ENCODE measurements at regions of chr4 and their contacts with region 1.

Region 1: GRCh38 chr4:77959566-77960338 is 97.1 kb downstream of the MRPL1 start:
- DNase-seq: no peak
- H3K4me3 Mint-ChIP-seq: no peak overlapping the region
- H3K27ac Mint-ChIP-seq: no peak overlapping the region
- H3K4me1 Mint-ChIP-seq: peaks cover 8% of the 10 kb centered on the region
- H3K27me3 Mint-ChIP-seq: no peaks in the 10 kb centered on the region

Region 2: DNA sequence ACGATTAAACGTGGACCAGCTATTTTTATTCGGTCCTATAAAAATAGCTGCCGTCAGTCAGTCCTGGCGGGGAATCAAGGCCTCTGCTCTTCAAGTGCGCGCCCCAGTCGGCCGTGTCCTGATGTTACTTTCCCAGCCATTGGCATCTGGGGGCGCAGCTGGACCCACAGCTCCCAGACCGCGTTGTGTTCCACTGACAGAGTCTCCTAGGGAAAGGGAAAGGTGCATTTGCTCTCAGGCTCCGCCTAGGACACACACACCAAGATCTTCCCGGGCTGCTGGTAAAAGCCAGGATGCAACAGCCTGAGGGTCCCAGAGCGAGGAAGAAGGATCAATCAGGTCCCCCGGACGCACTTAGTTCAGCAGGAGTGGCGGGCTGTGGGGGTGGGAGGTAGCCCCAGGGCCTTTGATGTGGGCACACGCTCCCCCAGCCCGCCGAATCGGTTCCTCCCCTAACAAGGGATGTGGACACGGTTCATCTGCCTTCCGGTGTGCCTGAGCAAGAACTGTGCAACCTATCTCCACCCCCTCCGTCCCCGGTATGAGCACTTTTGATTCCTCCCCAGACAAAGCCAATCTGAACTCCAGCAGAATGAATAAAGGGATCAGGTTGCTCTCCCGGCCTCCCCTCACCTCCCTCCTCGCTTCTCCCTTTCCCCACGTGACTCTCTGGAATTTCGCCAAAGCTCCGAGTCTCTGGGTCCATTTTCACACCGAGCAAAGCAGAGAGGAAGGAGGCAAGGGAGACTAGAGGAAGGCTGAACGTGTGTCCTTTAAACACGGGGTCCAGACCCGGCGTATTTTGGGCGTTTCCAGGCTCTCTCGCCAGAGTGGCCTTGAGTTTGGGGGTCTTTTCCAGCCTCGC is 96.7 kb after region 1 on chr4:
- CTCF ChIA-PET with region 1: interaction called, 4 read pairs
- POLR2A ChIA-PET with region 1: no interaction called
- intact Hi-C with region 1: loop called (anchors 5 kb)
- DNase-seq: peak; percentile 52
- H3K4me3 Mint-ChIP-seq: peak overlapping the region; percentile 53
- H3K27ac Mint-ChIP-seq: no peak overlapping the region
- H3K4me1 Mint-ChIP-seq: peaks cover 19% of the 10 kb centered on the region
- H3K27me3 Mint-ChIP-seq: peaks cover 46% of the 10 kb centered on the region

Region 3: DNA sequence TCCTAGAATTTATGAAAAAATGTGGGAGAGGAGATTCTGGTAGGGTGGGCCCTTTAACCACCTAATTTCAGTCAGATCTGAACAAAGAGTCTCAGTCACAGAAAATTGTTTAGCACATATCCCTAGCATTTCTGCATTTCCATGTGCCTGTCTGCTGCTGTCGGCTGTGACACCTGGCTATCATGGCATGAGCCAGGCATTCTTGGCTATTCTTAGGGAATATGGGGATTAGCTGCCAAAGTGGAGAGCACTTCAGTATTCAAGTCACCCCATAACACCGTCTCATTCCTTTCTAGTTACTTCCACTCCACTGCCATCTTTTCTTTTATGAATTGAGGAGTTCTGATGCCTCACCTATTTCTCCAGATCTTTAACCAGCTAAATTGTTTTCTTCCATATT is 308.8 kb after region 1 on chr4:
- CTCF ChIA-PET with region 1: no interaction called
- POLR2A ChIA-PET with region 1: no interaction called
- intact Hi-C with region 1: no loop called
- DNase-seq: no peak
- H3K4me3 Mint-ChIP-seq: no peak overlapping the region
- H3K27ac Mint-ChIP-seq: no peak overlapping the region
- H3K4me1 Mint-ChIP-seq: no peaks in the 10 kb centered on the region
- H3K27me3 Mint-ChIP-seq: no peaks in the 10 kb centered on the region

Region 4: GRCh38 chr4:78517050-78517652 is 557.4 kb after region 1 on chr4:
- CTCF ChIA-PET with region 1: no interaction called
- POLR2A ChIA-PET with region 1: no interaction called
- intact Hi-C with region 1: loop called (anchors 1 kb)
- DNase-seq: no peak
- H3K4me3 Mint-ChIP-seq: no peak overlapping the region
- H3K27ac Mint-ChIP-seq: no peak overlapping the region
- H3K4me1 Mint-ChIP-seq: no peaks in the 10 kb centered on the region
- H3K27me3 Mint-ChIP-seq: peaks cover 6% of the 10 kb centered on the region

Region 5: DNA sequence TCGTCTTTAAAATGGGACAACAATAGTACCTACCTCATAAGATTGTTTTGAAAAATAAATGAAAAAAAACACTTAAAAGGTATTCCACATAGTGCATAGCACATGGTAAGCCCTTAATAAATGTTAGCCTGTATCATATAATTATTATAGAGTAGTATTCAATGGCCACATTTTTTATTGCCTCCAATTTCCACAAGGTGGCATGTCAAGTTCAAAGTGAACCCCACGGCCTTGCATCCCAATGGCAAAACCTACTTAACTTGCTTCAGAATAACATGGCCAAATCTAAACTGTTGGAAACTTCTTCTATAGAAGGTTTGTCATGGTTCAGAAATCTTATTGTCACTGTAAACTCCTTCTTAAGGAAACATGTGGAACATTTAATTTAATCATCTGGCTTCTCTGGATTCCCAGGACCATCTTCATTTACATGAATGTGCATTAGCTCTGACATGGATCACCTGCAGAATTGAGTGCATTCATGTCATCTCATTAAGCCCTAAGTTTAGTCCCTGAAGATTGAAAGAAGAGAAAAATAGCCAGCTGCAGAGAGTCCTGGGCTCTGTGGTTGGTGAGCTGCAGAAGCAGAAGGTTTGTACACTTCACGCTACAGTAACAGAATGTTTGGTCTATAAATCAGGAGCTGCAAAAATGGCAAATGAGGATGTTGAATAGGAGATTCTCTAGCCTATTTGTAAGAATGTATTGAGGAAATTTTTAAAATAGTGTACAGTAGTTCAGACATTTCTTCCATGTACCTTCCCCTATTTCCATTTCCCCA is 652.8 kb after region 1 on chr4:
- CTCF ChIA-PET with region 1: no interaction called
- POLR2A ChIA-PET with region 1: no interaction called
- intact Hi-C with region 1: loop called (anchors 2 kb)
- DNase-seq: peak; percentile 15
- H3K4me3 Mint-ChIP-seq: no peak overlapping the region
- H3K27ac Mint-ChIP-seq: no peak overlapping the region
- H3K4me1 Mint-ChIP-seq: peaks cover 23% of the 10 kb centered on the region
- H3K27me3 Mint-ChIP-seq: no peaks in the 10 kb centered on the region

Measured in activated CD4-positive, alpha-beta memory T cell treated with anti-CD3 and anti-CD28 coated beads for 36 hours (primary cell).